Activated CD8-positive, alpha-beta memory T cell treated with anti-CD3 and anti-CD28 coated beads, Interleukin-2, amount 10 ng/mL, durations not matched to agents 7 days and 5 days (primary cell): ENCODE measurements at regions of chr19 and their contacts with region 1.

Region 1: GRCh38 chr19:8505680-8506401 is 3.4 kb upstream of the PRAM1 start:
- DNase-seq: peak; percentile 71
- ATAC-seq: peak; percentile 83
- H3K4me3 Mint-ChIP-seq: peak overlapping the region; percentile 82
- H3K27ac Mint-ChIP-seq: peak overlapping the region; percentile 78
- H3K4me1 Mint-ChIP-seq: peaks cover 15% of the 10 kb centered on the region
- H3K27me3 Mint-ChIP-seq: no peaks in the 10 kb centered on the region

Region 2: DNA sequence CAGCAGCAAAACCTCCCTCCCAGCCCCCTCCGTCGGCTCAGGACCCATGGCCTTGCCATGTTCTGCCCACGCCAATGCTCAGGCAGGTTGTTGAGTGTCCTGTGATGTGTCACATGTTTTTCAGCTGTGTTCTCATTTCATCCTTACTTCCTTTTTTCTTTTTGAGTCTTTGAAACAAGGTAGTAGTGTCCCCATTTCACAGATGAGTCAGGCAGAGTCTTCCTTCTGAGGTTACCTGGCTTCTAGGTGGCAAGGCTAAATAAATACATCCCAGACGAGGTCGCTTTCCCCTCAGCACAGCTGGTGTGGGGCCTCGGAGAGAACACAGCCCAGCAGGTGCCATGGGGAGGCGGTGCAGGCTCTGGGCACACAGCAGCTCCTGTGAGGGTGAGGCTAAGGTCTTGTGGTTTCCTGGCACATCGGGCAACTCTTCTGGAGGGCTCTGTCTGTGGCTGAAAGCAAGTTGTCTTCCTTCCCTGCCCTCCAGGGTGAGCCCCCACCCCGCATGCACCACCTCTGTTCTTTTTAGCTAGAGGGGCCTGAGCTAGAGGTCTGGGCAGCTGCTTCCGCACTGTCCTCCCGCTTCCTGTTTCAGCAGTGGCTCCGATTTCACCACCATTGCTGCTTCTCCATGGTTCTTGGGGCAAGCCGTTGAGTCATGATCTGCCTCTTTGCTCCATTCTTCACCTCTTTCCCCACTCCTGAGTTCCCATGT is 18.5 kb before region 1 on chr19:
- CTCF ChIA-PET with region 1: interaction called, 20 read pairs
- DNase-seq: peak; percentile 78
- ATAC-seq: peak; percentile 78
- H3K4me3 Mint-ChIP-seq: no peak overlapping the region
- H3K27ac Mint-ChIP-seq: peak overlapping the region; percentile 82
- H3K4me1 Mint-ChIP-seq: peaks cover 39% of the 10 kb centered on the region
- H3K27me3 Mint-ChIP-seq: no peaks in the 10 kb centered on the region

Region 3: DNA sequence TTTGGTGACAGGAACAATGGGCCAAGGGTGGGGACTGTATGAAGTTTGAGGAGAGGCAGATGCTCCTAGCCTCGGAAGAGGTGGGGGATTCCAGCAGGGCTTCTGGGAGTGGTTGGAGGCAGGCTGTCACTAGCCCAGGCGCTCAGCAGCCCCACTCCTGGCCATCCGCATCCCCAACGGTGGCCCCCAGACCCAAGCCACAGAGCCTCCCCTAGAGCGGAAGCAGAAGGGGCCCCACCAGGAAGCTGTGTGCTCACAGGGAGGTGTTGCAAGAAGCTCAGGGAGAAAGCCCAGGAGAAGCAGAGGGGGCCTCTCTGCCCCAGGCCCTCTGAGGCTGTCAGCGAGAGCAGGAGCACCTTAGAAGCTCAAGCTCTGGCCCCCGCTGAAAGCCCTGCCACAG is 11.7 kb before region 1 on chr19:
- CTCF ChIA-PET with region 1: interaction called, 12 read pairs
- DNase-seq: no peak
- ATAC-seq: peak; percentile 45
- H3K4me3 Mint-ChIP-seq: no peak overlapping the region
- H3K27ac Mint-ChIP-seq: peak overlapping the region; percentile 69
- H3K4me1 Mint-ChIP-seq: peaks cover 13% of the 10 kb centered on the region
- H3K27me3 Mint-ChIP-seq: no peaks in the 10 kb centered on the region